ENCODE measurements at regions of chr9 and their contacts with region 1.

Region 1: GRCh38 chr9:92325269-92325990 is at the starts of genes CENPP and NOL8:
- DNase-seq: peak; percentile 74
- ATAC-seq: peak; percentile 91
- H3K4me3 Mint-ChIP-seq: peak within 1 kb of the TSS; percentile 98
- H3K27ac Mint-ChIP-seq: peak within 1 kb of the TSS; percentile 98
- H3K4me1 Mint-ChIP-seq: peaks cover 27% of the 10 kb centered on the region
- H3K27me3 Mint-ChIP-seq: no peaks in the 10 kb centered on the region
- CTCF ChIP-seq: no peak
- total RNA-seq, gene CENPP: 5.7 and 5.9 TPM in 2 replicates
- total RNA-seq, gene NOL8: 67.0 and 78.4 TPM in 2 replicates

Region 2: DNA sequence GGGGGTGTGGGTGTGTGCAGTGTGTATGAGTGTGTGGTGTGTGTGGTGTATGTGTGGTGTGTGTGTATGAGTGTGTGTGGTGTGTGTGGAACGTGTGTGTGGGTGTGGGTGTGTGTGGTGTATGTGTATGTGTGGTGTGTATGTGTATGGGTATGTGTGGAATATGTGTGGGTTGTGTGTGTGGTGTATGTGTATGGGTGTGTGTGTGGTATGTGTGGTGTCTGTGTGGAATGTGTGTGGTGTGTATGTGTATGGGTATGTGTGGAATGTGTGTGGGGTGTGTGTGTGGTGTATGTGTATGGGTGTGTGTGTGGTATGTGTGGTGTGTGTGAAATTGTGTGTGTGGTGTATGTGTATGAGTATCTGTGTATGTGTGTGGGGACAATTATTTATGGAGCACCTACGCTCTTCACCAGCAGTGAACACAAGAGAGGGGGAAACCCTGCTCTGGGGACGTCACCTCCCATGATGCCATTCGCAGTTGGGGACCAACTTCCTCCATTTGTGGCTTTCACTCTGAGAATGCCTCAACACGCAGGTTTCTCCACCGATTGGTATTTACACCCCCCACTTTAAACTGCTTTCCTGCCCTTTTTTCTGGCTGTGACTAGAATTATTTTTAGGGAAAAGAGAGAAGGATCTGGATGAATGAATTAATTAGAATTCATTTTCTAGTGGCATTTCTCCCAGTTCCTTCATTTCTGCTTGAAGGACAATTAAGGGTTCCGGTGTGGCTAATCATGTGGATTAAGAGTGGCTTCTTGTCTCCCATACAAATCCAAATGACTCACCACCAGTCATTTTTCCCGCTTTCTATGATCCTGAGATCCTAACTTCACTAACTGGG is 613.5 kb before region 1 on chr9:
- CTCF ChIA-PET with region 1: no interaction called
- POLR2A ChIA-PET with region 1: no interaction called
- intact Hi-C with region 1: loop called (anchors 10 kb)
- DNase-seq: peak; percentile 54
- ATAC-seq: peak; percentile 94
- H3K4me3 Mint-ChIP-seq: no peak overlapping the region
- H3K27ac Mint-ChIP-seq: no peak overlapping the region
- H3K4me1 Mint-ChIP-seq: peaks cover 6% of the 10 kb centered on the region
- H3K27me3 Mint-ChIP-seq: no peaks in the 10 kb centered on the region
- CTCF ChIP-seq: no peak

Region 3: GRCh38 chr9:92276331-92277032 is 48.9 kb before region 1 on chr9:
- CTCF ChIA-PET with region 1: no interaction called
- POLR2A ChIA-PET with region 1: no interaction called
- intact Hi-C with region 1: loop called (anchors 5 kb)
- DNase-seq: no peak
- ATAC-seq: no peak
- H3K4me3 Mint-ChIP-seq: no peak overlapping the region
- H3K27ac Mint-ChIP-seq: no peak overlapping the region
- H3K4me1 Mint-ChIP-seq: no peaks in the 10 kb centered on the region
- H3K27me3 Mint-ChIP-seq: no peaks in the 10 kb centered on the region
- CTCF ChIP-seq: no peak

Region 4: DNA sequence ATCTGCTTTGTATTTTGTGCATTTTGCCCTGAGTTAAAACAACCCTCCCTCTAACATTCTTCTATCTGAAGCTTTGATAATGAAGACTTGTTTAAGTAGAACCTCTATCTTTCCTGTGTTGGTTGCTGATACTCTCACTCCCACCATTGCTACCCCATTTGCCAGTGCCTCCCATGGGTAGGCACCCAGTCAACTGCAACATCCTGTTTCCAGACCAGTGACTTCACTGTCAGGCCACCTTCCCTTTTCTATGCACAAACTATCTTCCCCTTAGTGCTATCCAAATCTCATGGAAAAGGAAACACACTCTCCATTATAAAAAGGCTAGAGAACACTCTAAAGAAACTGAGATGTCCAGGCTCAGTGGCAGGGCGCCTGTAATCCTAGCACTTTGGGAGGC is 26.3 kb before region 1 on chr9:
- CTCF ChIA-PET with region 1: no interaction called
- POLR2A ChIA-PET with region 1: interaction called, 11 read pairs
- intact Hi-C with region 1: no loop called
- DNase-seq: no peak
- ATAC-seq: peak; percentile 85
- H3K4me3 Mint-ChIP-seq: peak overlapping the region; percentile 36
- H3K27ac Mint-ChIP-seq: peak overlapping the region; percentile 72
- H3K4me1 Mint-ChIP-seq: peaks cover 47% of the 10 kb centered on the region
- H3K27me3 Mint-ChIP-seq: no peaks in the 10 kb centered on the region
- CTCF ChIP-seq: no peak

Region 5: DNA sequence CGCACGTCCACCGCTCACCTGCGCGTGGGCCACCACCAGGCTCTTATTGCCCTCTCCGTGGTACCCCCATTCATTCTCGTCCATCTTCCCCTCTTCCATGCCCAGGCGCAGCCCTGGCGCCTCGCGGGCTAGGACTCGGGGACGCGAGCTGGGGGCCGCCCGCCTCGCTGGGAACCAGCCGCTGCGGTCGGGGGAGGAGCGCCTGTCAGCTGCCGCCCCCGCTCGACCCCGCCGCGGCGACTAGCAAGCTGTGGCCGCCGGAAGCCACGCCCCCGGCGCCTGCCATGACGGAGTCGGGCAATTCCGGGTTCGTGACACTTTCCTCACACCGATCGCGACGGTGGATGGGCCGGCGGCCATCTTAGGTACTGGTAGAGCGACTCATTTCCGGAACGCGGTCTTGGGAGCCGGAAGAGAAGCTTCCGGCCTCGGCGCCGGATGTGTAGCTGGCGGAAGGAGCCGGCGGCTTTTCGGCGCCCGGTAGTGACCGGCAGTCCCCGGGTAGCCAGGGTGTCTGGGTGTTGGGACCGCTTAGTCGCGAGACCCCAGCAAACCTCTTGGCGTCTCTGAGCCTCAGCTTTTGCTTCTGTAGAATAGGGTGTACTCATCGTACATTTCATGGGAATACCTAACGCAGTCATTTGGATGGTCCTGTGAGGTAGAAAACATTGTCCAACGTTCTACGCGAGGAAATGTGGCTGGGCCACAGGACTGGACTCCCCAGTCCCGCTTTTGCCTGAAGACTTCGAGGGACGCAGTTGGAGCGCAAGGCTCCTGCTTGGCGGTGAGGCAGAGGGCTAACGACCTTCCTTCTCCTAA is 344.7 kb after region 1 on chr9 and contains the start of gene IPPK:
- CTCF ChIA-PET with region 1: no interaction called
- POLR2A ChIA-PET with region 1: interaction called, 19 read pairs
- intact Hi-C with region 1: loop called (anchors 1 kb)
- DNase-seq: peak; percentile 94
- ATAC-seq: peak; percentile 93
- H3K4me3 Mint-ChIP-seq: peak within 1 kb of the TSS; percentile 96
- H3K27ac Mint-ChIP-seq: peak within 1 kb of the TSS; percentile 94
- H3K4me1 Mint-ChIP-seq: peaks cover 25% of the 10 kb centered on the region
- H3K27me3 Mint-ChIP-seq: no peaks in the 10 kb centered on the region
- CTCF ChIP-seq: no peak
- total RNA-seq, gene IPPK: 9.7 and 9.8 TPM in 2 replicates